ENCODE measurements at regions of chr1 and their contacts with region 1.

Region 1: DNA sequence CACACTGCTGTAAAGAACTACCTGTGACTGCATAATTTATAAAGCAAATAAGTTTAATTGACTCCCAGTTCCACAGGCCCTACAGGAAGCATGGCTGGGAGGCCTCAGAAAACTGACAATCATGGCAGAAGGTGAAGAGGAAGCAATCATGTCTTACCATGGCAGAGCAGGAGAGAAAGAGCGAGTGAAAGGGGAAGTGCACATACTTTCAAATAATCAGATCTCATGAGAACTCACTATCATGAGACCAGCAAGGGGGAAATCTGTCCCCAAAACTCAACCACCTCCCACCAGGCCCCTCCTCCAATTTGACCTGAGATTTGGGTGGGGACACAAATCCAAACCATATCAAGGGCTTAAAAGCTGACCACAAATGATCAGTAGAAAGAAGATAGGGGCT is 493.2 kb downstream of the PTPRC start:
- DNase-seq: no peak
- H3K4me3 ChIP-seq: no peak overlapping the region
- H3K27ac ChIP-seq: no peak overlapping the region
- H3K4me1 ChIP-seq: no peaks in the 10 kb centered on the region
- H3K27me3 ChIP-seq: no peaks in the 10 kb centered on the region
- CTCF ChIP-seq: no peak

Region 2: GRCh38 chr1:199113265-199113869 is 18.6 kb before region 1 on chr1:
- CTCF ChIA-PET with region 1: no interaction called
- POLR2A ChIA-PET with region 1: no interaction called
- intact Hi-C with region 1: no loop called
- DNase-seq: peak in 1 of 2 experiments; percentile 20
- H3K4me3 ChIP-seq: no peak overlapping the region
- H3K27ac ChIP-seq: no peak overlapping the region
- H3K4me1 ChIP-seq: no peaks in the 10 kb centered on the region
- H3K27me3 ChIP-seq: no peaks in the 10 kb centered on the region
- CTCF ChIP-seq: peak; percentile 70

Region 3: DNA sequence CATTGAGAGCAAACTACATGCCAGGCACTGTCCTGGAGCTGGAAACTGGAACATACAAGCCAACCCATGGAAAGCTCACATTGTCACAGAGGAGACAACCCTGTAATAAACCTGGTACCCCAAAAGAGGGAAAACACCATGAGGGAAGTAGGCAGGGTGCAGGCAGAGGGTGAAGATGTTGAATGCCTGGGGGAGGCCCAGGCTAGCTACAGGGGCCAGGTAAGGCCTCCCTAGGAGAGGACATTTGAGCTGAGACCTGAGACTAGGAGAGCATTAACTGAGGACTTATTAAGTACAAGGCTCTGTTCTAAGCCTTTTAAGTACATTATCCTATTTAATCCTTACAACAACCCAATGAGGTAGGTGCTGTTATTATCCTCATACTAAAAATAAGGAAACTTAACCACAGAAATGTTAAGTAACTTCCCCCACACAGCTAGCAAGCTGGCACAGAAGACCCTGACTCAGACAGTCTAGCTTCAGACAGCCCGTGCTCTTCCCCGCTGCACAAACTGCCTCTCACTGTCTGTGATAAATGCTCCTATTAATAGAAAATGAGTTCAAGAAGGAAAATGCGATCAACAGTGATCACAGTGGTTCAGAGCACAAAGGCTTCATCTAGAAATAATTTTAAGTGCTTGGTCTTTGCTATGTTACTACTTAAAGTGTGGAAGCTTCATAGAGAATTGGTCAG is 1236.0 kb after region 1 on chr1:
- CTCF ChIA-PET with region 1: no interaction called
- POLR2A ChIA-PET with region 1: no interaction called
- intact Hi-C with region 1: loop called (anchors 10 kb)
- DNase-seq: no peak
- H3K4me3 ChIP-seq: no peak overlapping the region
- H3K27ac ChIP-seq: no peak overlapping the region
- H3K4me1 ChIP-seq: peaks cover 60% of the 10 kb centered on the region
- H3K27me3 ChIP-seq: no peaks in the 10 kb centered on the region
- CTCF ChIP-seq: no peak

Measured in PC-9 (cell line).